ENCODE measurements at regions of chrX and their contacts with region 1.

Region 1: DNA sequence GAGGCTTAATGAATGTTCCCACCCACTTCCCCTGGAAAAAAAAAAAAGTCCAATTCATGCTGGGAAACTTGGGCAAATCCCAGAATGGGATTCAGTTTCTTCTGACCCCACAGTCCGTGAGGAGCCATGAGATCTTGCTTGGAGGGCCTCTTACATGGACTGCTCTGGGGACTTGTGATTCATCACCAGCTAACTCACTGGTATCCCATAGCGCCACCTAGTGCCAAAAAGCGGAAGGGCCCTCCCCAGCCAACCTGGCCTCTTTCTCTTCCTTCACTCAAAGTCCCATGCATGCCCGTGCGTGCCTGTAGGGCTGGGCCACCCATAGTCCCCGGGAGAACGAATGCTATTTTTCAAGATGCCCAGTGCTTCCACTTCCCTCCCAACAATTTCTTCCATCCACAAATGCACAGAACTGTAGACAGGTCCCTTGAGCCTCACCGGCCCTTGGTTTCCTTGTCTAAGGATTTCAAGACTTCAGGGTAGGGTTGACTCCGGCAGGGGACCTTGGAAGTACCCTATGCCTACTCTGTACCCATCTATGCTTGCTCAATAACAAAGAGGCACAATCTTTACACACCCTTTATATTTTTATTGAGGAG is 5.1 kb downstream of the RTL5 start:
- DNase-seq: peak; percentile 47 to 88 (median 74)
- ATAC-seq: peak; percentile 77 to 85 (median 80)
- H3K4me3 ChIP-seq: no peak overlapping the region
- H3K4me3 Mint-ChIP-seq: no peak overlapping the region
- H3K27ac ChIP-seq: no peak overlapping the region
- H3K27ac Mint-ChIP-seq: peak overlapping the region; percentile 5 to 61
- H3K4me1 ChIP-seq: peaks cover 0 to 61% of the 10 kb centered on the region in 2 experiments
- H3K4me1 Mint-ChIP-seq: peaks cover 17 to 66% (median 52%) of the 10 kb centered on the region in 3 donors
- H3K27me3 ChIP-seq: peaks cover 0 to 12% of the 10 kb centered on the region in 2 experiments
- H3K27me3 Mint-ChIP-seq: peaks cover 7 to 35% of the 10 kb centered on the region in 2 donors

Region 2: GRCh38 chrX:72018277-72019112 is 108.1 kb before region 1 on chrX:
- CTCF ChIA-PET with region 1: interaction called, 5 to 20 read pairs
- POLR2A ChIA-PET with region 1: no interaction called
- DNase-seq: peak; percentile 54 to 87 (median 72)
- ATAC-seq: peak; percentile 98 to 99 (median 98)
- H3K4me3 ChIP-seq: peak overlapping the region in 1 of 2 donors; percentile 17
- H3K4me3 Mint-ChIP-seq: no peak overlapping the region
- H3K27ac ChIP-seq: no peak overlapping the region
- H3K27ac Mint-ChIP-seq: no peak overlapping the region
- H3K4me1 ChIP-seq: peaks cover 0 to 20% of the 10 kb centered on the region in 2 experiments
- H3K4me1 Mint-ChIP-seq: peaks cover 6 to 26% (median 14%) of the 10 kb centered on the region in 3 donors
- H3K27me3 ChIP-seq: peaks cover 2 to 11% of the 10 kb centered on the region in 2 experiments
- H3K27me3 Mint-ChIP-seq: peaks cover 0 to 47% of the 10 kb centered on the region in 2 donors

Region 3: GRCh38 chrX:72069350-72070160 is 57.1 kb before region 1 on chrX:
- CTCF ChIA-PET with region 1: no interaction called
- POLR2A ChIA-PET with region 1: no interaction called
- DNase-seq: no peak
- ATAC-seq: no peak
- H3K4me3 ChIP-seq: no peak overlapping the region
- H3K4me3 Mint-ChIP-seq: peak overlapping the region in 2 of 3 donors; percentile 0 to 37
- H3K27ac ChIP-seq: no peak overlapping the region
- H3K27ac Mint-ChIP-seq: no peak overlapping the region
- H3K4me1 ChIP-seq: peaks cover 0 to 12% of the 10 kb centered on the region in 2 experiments
- H3K4me1 Mint-ChIP-seq: peaks cover 0 to 10% (median 4%) of the 10 kb centered on the region in 3 donors
- H3K27me3 ChIP-seq: peaks cover 0 to 22% of the 10 kb centered on the region in 2 experiments
- H3K27me3 Mint-ChIP-seq: peaks cover 26 to 71% of the 10 kb centered on the region in 2 donors